T-cell (primary cell): ENCODE measurements at regions of chr20 and their contacts with region 1.

Region 1: DNA sequence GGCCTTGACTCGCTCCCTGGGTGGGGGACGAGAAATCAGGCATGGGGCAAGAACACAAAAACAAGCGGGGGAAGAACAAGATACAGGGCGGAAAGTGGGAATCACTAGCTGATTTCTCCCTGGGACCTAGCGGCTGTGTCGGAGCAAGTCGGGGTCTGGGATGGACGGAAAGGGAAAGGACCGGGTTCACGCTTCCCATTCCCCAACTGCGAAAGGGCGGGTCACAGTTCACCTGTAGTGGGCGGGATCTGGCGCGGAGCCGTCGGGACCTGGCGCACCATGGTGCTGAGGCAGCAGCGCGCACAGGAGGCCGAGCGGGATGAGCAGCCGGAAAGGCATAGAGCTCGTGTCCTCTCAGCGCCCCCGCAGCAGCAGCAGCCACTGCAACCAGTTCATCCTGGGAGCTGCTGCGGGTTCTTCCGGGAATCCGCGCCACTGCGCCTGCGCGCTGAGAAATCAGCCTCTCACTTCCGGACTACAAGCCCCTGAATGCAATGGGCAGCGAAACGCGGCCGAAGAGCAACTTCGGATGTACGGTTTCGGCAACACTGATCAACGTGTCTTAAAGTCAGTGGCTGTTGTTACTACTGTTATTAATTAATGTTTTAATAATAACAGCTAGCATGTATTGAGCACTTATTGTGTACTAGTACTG is at the start of gene EDEM2:
- DNase-seq: peak; percentile 84 to 97 (median 90)
- ATAC-seq: peak; percentile 89 to 93 (median 92)
- H3K4me3 ChIP-seq: peak within 1 kb of the TSS; percentile 76 to 100
- H3K4me3 Mint-ChIP-seq: peak within 1 kb of the TSS; percentile 93 to 98 (median 96)
- H3K27ac ChIP-seq: peak within 1 kb of the TSS; percentile 70
- H3K27ac Mint-ChIP-seq: peak within 1 kb of the TSS; percentile 92 to 97
- H3K4me1 ChIP-seq: peaks cover 7 to 23% of the 10 kb centered on the region in 2 experiments
- H3K4me1 Mint-ChIP-seq: peaks cover 36 to 41% (median 38%) of the 10 kb centered on the region in 3 donors
- H3K27me3 ChIP-seq: no peaks in the 10 kb centered on the region
- H3K27me3 Mint-ChIP-seq: no peaks in the 10 kb centered on the region
- total RNA-seq, gene EDEM2: 17.7 to 29.8 (median 25.9) TPM

Region 2: DNA sequence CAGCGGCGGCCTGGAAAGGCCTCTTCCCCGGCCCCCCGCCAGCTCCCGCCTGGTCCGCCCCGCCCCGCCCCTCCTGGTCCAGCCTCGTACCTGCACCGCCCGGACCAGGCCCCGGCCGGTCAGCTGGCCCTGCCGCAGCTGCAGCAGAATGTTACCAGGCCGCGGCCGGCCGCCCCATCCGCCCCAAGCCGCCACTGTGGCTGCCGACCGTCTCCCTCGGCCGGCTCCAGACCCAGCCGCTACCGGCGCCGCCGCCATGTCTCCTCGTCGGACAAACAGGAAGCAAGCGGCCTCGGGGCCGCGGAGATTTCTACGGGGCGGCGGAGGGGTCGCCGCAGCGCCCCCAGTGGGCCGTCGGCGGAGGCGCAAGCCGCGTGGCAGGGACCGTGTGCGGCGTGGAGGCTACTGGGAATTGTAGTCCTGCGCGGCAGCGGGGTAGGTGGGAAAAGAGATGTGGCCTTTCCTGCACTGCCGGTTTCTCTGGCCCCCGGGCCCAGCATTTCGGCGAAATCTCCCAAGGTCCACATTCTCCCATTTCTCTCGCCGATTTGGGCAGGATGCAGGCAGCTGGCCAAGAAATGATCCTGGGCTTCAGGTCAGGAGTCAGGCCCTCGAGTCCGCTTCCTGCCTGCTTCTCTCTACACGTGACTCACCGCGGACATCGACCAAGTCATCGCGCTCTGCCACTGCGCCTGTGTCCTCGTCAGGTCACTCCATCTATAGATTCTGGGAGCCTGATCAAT is 54.4 kb before region 1 on chr20 and contains the start of gene TRPC4AP:
- CTCF ChIA-PET with region 1: interaction called in 1 of 2 experiments, 61 read pairs
- POLR2A ChIA-PET with region 1: interaction called in 1 of 2 experiments, 3 read pairs
- DNase-seq: peak; percentile 77 to 95 (median 85)
- ATAC-seq: peak; percentile 97 to 99 (median 97)
- H3K4me3 ChIP-seq: peak within 1 kb of the TSS; percentile 88 to 91
- H3K4me3 Mint-ChIP-seq: peak within 1 kb of the TSS; percentile 86 to 98 (median 87)
- H3K27ac ChIP-seq: peak within 1 kb of the TSS; percentile 67
- H3K27ac Mint-ChIP-seq: peak within 1 kb of the TSS; percentile 92 to 95
- H3K4me1 ChIP-seq: peaks cover 11 to 36% of the 10 kb centered on the region in 2 experiments
- H3K4me1 Mint-ChIP-seq: peaks cover 40 to 51% (median 51%) of the 10 kb centered on the region in 3 donors
- H3K27me3 ChIP-seq: no peaks in the 10 kb centered on the region
- H3K27me3 Mint-ChIP-seq: no peaks in the 10 kb centered on the region
- total RNA-seq, gene TRPC4AP: 56.3 to 65.5 (median 63.5) TPM

Region 3: GRCh38 chr20:35207950-35208611 is 61.0 kb after region 1 on chr20:
- CTCF ChIA-PET with region 1: interaction called, 5 to 32 read pairs
- POLR2A ChIA-PET with region 1: no interaction called
- DNase-seq: peak; percentile 34 to 86 (median 72)
- ATAC-seq: peak; percentile 63 to 92 (median 80)
- H3K4me3 ChIP-seq: no peak overlapping the region
- H3K4me3 Mint-ChIP-seq: no peak overlapping the region
- H3K27ac ChIP-seq: no peak overlapping the region
- H3K27ac Mint-ChIP-seq: no peak overlapping the region
- H3K4me1 ChIP-seq: no peaks in the 10 kb centered on the region
- H3K4me1 Mint-ChIP-seq: no peaks in the 10 kb centered on the region
- H3K27me3 ChIP-seq: no peaks in the 10 kb centered on the region
- H3K27me3 Mint-ChIP-seq: no peaks in the 10 kb centered on the region

Region 4: GRCh38 chr20:35277531-35278395 is 130.7 kb after region 1 on chr20 and contains the start of gene MMP24OS:
- CTCF ChIA-PET with region 1: interaction called in 1 of 2 experiments, 19 read pairs
- POLR2A ChIA-PET with region 1: no interaction called
- DNase-seq: peak; percentile 75 to 93 (median 86)
- ATAC-seq: peak; percentile 90 to 93 (median 92)
- H3K4me3 ChIP-seq: peak within 1 kb of the TSS; percentile 65 to 73
- H3K4me3 Mint-ChIP-seq: peak within 1 kb of the TSS; percentile 90 to 95 (median 93)
- H3K27ac ChIP-seq: peak within 1 kb of the TSS; percentile 94
- H3K27ac Mint-ChIP-seq: peak within 1 kb of the TSS; percentile 98 to 99
- H3K4me1 ChIP-seq: peaks cover 0 to 34% of the 10 kb centered on the region in 2 experiments
- H3K4me1 Mint-ChIP-seq: peaks cover 22 to 34% (median 26%) of the 10 kb centered on the region in 3 donors
- H3K27me3 ChIP-seq: no peaks in the 10 kb centered on the region
- H3K27me3 Mint-ChIP-seq: no peaks in the 10 kb centered on the region
- total RNA-seq, gene MMP24OS: 59.5 to 95.5 (median 72.0) TPM

Region 5: GRCh38 chr20:35443003-35443402 is 296.0 kb after region 1 on chr20:
- CTCF ChIA-PET with region 1: no interaction called
- POLR2A ChIA-PET with region 1: no interaction called
- DNase-seq: no peak
- ATAC-seq: no peak
- H3K4me3 ChIP-seq: no peak overlapping the region
- H3K4me3 Mint-ChIP-seq: no peak overlapping the region
- H3K27ac ChIP-seq: no peak overlapping the region
- H3K27ac Mint-ChIP-seq: no peak overlapping the region
- H3K4me1 ChIP-seq: peaks cover 0 to 11% of the 10 kb centered on the region in 2 experiments
- H3K4me1 Mint-ChIP-seq: peaks cover 4 to 9% (median 6%) of the 10 kb centered on the region in 3 donors
- H3K27me3 ChIP-seq: peaks cover 0 to 46% of the 10 kb centered on the region in 2 experiments
- H3K27me3 Mint-ChIP-seq: peaks cover 8 to 9% of the 10 kb centered on the region in 2 donors